HEK293 (cell line): ENCODE measurements at regions of chr19 and their contacts with region 1.

Region 1: GRCh38 chr19:6516659-6517291 is 14.1 kb upstream of the TNFSF9 start:
- H3K4me3 ChIP-seq: peak overlapping the region; percentile 57
- H3K27ac ChIP-seq: peak overlapping the region; percentile 69; the same call in 1 of the 2 replicates
- H3K4me1 ChIP-seq: no peaks in the 10 kb centered on the region
- CTCF ChIP-seq: peak; percentile 98

Region 2: DNA sequence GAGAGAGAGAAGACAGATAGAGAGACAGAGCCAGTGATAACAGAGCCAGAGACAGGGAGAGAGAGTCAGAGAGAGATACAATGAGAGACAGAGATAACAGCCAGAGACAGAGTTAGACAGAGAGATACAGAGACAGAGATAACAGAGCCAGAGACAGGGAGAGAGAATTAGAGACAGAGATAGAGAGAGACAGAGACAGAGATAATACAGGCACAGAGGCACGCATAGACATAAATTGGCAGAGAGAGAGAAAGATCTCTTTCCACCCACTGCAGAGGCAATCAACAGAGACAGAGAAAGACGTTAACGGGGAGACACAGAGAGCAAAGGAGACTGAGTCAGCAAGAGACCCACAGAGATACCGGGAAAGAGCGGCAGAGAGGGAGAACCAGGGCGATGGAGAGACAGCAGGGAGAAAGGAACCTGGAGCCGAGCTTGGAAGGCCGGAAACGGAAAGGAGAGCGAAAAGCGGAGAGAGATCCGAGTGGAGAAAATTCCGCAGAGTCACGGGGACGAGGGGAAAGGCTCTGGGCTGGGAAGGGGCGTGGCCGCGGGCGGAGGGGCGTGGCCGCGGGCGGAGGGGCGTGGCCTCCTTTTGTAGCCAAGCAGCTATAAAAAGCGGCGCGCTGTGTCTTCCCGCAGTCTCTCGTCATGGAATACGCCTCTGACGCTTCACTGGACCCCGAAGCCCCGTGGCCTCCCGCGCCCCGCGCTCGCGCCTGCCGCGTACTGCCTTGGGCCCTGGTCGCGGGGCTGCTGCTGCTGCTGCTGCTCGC is 13.8 kb after region 1 on chr19 and contains the start of gene TNFSF9:
- CTCF ChIA-PET with region 1: interaction called, 7 read pairs
- POLR2A ChIA-PET with region 1: interaction called, 17 read pairs
- H3K4me3 ChIP-seq: peak within 1 kb of the TSS; percentile 56
- H3K27ac ChIP-seq: peak within 1 kb of the TSS; percentile 49; the same call in 1 of the 2 replicates
- H3K4me1 ChIP-seq: no peaks in the 10 kb centered on the region; the same call in 1 of the 2 replicates
- CTCF ChIP-seq: no peak

Region 3: DNA sequence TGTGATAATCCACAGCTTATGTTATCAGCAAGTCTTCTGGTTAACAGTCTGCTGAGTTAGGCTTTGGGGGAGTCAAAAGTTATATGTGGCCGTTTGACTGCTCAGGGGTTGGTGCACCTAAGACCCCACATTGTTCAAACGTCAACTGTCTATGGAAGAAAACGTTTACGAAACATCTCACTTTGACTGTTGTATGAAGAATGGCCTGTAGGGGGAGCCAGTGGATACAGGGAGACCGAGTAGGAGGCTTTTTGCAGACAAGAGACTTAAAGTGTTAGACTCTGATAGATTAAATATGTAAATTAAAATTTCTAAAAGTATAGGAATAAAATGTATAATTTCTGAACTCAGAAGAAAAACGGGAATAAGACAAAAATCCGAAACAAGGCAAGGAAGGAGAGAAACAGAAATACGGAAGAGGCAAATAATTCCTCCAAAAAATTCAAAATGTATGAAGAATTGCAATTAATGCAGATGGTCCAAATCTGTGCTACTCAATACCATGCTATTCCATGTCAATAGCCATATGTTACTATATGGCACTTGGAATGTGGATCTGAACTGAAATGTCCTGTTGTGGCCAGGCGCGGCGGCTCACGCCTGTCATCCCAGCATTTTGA is 115.3 kb after region 1 on chr19:
- CTCF ChIA-PET with region 1: interaction called, 16 read pairs
- POLR2A ChIA-PET with region 1: interaction called, 3 read pairs
- H3K4me3 ChIP-seq: no peak overlapping the region
- H3K27ac ChIP-seq: no peak overlapping the region
- H3K4me1 ChIP-seq: no peaks in the 10 kb centered on the region
- CTCF ChIP-seq: peak; percentile 27; the same call in 1 of the 2 replicates

Region 4: DNA sequence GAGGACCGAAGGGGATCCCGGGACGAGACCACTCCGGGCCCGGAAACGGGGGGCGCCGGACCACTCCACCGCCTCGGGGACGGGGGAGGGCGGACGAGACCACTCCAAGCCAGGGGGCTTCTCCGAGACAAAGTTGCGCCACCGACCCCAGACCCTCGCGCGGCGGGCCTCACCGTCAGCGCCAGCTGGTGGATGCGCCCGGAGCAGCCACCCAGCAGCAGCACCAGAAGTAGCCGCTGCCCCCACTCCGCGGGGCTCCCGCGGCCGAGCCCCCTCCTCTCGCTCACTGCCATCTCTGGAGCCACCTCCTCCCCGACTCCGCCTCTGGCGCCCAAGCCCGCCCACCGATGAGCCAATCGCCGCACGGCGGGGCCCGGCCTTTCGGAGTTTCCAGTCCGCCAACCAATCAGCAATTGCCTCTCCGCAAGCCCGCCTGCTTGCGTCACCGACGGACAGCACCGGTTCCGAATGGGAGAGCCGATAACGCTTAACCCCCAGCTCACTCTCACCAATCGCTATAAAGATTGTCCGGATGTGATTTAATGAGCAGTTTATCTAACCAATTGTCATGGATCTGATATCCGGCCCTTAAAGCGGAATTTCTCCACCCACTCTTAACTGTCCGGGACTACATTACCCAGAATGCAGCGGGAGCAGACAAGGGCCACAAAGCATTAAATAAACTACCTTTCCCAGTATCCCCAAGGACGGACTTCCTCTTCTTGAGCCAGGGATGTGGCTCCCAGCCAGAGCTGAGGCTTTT is 220.7 kb after region 1 on chr19 and contains the start of gene GPR108:
- CTCF ChIA-PET with region 1: interaction called, 10 read pairs
- POLR2A ChIA-PET with region 1: no interaction called
- H3K4me3 ChIP-seq: peak within 1 kb of the TSS; percentile 64
- H3K27ac ChIP-seq: peak within 1 kb of the TSS; percentile 78
- H3K4me1 ChIP-seq: peaks cover 11% of the 10 kb centered on the region
- CTCF ChIP-seq: 0 out of 2 replicates have a peak, but pooled peaks have one; percentile 6

Region 5: DNA sequence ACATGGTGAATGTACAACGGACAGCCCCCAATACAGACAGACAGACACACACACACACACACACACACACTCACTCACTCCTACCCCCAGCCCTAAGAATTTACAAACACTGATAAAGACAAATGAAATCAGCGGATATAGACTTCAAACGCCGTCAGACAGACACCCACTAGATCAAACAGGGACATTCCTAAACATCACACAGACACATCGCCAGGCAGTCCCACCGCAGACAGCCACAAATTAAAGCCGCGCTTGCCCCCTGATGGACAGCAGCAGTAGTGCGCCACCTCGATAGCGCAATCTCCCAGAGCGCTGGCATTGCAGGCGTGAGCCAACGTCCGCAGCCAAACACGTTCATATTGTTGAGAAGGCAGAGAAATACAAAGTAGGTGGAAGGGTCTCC is 345.9 kb after region 1 on chr19:
- CTCF ChIA-PET with region 1: interaction called, 20 read pairs
- POLR2A ChIA-PET with region 1: interaction called, 5 read pairs
- H3K4me3 ChIP-seq: peak overlapping the region; percentile 20; the same call in 1 of the 2 replicates
- H3K27ac ChIP-seq: no peak overlapping the region
- H3K4me1 ChIP-seq: no peaks in the 10 kb centered on the region
- CTCF ChIP-seq: peak; percentile 93